ENCODE measurements at regions of chr5 and their contacts with region 1.

Region 1: DNA sequence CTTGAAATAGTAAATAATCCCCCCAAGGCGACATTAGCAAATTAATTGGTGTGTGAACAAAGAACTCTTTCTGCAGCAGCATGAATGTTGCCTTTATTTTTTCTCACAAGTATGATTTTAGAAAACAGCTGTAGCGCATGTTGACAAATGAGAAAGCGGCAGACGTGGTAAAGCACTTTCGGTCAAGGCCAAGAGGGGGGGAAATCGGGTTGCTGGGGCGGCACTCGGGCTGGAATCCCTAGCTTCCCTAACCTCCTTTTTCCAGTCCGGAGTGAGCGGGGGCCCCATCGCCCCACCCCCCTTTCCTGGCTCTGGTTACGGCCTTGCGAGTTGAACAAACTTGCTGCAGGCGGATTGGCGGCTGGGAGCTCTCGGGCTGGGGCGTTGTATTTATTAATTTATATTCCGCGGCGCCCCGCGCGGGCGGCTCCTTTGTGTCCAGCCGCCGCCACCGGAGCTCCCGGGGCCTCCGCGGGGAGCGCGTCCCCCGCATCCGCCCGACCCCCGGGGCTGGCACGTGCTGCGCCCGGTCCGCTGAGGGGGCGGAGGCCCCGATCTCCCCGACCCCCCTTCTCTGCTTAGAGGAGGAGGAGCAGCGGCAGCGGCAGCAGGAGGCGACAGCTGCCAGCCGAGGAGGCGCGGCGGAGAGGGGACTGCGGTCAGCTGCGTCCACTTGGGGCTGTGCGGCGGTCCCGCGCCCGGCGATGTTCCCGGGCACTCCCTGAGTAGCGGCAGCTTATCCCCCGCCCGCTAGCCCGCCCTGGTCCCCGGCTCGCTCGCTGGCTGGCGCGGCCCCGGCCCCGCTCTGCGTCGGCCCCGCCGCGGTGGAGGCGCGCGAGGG is at the start of gene RHOBTB3:
- DNase-seq: peak in 1 of 2 experiments; percentile 84
- H3K4me3 ChIP-seq: peak within 1 kb of the TSS; percentile 78 to 84 (median 82)
- H3K27ac ChIP-seq: no peak within 1 kb of the TSS
- H3K4me1 ChIP-seq: peaks cover 0 to 12% (median 8%) of the 10 kb centered on the region in 4 experiments; a peak in 5 of 7 replicates
- H3K27me3 ChIP-seq: peaks cover 1 to 43% (median 19%) of the 10 kb centered on the region in 4 experiments
- CTCF ChIP-seq: no peak
- EP300 ChIP-seq: no peak
- POLR2A ChIP-seq: peak in 1 of 2 experiments; percentile 64; a peak in 1 of 3 replicates
- RAD21 ChIP-seq: no peak; a peak in 1 of 4 replicates
- total RNA-seq, gene RHOBTB3: 8.2 and 11.5 TPM in 2 replicates

Region 2: DNA sequence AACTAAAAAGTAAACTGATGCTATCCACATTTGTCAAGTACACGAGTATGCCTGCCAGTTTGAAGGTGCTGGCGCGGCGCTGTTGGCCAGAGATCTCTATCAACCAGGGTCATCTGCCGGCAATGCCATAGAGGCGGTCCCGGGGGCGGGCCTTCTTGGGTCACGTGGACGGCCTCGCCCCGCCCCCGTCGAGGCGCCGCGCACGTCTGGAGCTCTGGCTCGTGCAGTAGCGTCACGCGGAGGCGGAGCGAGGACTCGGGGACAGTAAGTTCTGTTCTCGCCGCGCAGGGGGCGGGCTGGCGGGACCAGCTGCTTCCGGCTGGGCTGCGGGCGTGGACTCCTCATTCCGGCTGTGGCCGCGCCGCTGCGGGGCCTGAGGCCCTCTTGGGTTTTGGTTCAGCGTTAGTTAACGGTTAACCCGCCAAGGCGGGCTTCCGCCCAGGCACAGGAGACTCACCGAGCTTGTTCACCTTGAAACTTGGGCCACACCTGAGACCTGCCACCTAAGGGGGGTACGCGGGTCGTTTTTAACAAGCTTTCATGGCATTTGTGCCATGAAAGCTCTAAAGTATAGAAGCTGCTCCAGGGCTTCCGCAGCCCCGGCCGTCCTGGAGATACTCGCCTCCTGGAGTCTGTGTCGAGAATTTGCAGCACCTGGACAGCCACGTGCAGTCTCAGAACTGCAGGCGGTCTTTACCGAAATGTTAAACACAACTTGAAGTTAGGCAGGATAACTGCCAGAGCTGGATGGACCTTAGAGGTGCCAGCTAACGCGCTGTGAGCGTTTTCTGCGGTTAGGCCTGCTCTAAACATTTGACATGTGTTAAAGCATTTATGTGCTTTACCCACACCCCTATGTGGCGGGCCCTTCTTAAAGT is 84.2 kb before region 1 on chr5 and contains the start of gene RFESD:
- CTCF ChIA-PET with region 1: interaction called, 3 read pairs
- POLR2A ChIA-PET with region 1: interaction called, 10 read pairs
- DNase-seq: peak; percentile 92 to 97
- H3K4me3 ChIP-seq: peak within 1 kb of the TSS; percentile 47 to 63 (median 56)
- H3K27ac ChIP-seq: peak within 1 kb of the TSS; percentile 20; the same call in 1 of the 2 replicates
- H3K4me1 ChIP-seq: peaks cover 0 to 6% (median 3%) of the 10 kb centered on the region in 4 experiments; a peak in 2 of 7 replicates
- H3K27me3 ChIP-seq: no peaks in the 10 kb centered on the region
- CTCF ChIP-seq: peak in 2 of 3 experiments; percentile 7 to 9; a peak in 2 of 4 replicates
- EP300 ChIP-seq: peak in 1 of 2 experiments; percentile 48; a peak in 1 of 3 replicates
- POLR2A ChIP-seq: peak in 1 of 2 experiments; percentile 81; a peak in 2 of 3 replicates
- RAD21 ChIP-seq: peak in 1 of 2 experiments; percentile 26; a peak in 1 of 4 replicates
- total RNA-seq, gene RFESD: 2.0 and 4.3 TPM in 2 replicates

Region 3: GRCh38 chr5:95712347-95712958 is 18.5 kb before region 1 on chr5:
- CTCF ChIA-PET with region 1: interaction called, 6 read pairs
- POLR2A ChIA-PET with region 1: interaction called, 24 read pairs
- DNase-seq: no peak
- H3K4me3 ChIP-seq: no peak overlapping the region
- H3K27ac ChIP-seq: no peak overlapping the region; the same call in 1 of the 2 replicates
- H3K4me1 ChIP-seq: peaks cover 2 to 10% (median 5%) of the 10 kb centered on the region in 4 experiments; a peak in 3 of 7 replicates
- H3K27me3 ChIP-seq: peaks cover 0 to 11% (median 9%) of the 10 kb centered on the region in 4 experiments; a peak in 6 of 7 replicates
- CTCF ChIP-seq: no peak
- EP300 ChIP-seq: no peak
- POLR2A ChIP-seq: no peak
- RAD21 ChIP-seq: no peak

Region 4: GRCh38 chr5:95808686-95809413 is 77.9 kb after region 1 on chr5:
- CTCF ChIA-PET with region 1: no interaction called
- POLR2A ChIA-PET with region 1: no interaction called
- DNase-seq: no peak
- H3K4me3 ChIP-seq: no peak overlapping the region
- H3K27ac ChIP-seq: no peak overlapping the region
- H3K4me1 ChIP-seq: peaks cover 0 to 14% (median 7%) of the 10 kb centered on the region in 4 experiments; a peak in 4 of 7 replicates
- H3K27me3 ChIP-seq: no peaks in the 10 kb centered on the region
- CTCF ChIP-seq: no peak
- EP300 ChIP-seq: no peak
- POLR2A ChIP-seq: no peak
- RAD21 ChIP-seq: no peak

Measured in H1 (cell line).